ENCODE measurements at regions of chr9 and their contacts with region 1.

Region 1: GRCh38 chr9:78369639-78370219 is 72.8 kb downstream of the PSAT1 start:
- DNase-seq: peak; percentile 73
- ATAC-seq: peak; percentile 87
- H3K4me3 ChIP-seq: no peak overlapping the region
- H3K27ac ChIP-seq: no peak overlapping the region
- H3K4me1 ChIP-seq: no peaks in the 10 kb centered on the region; the same call in 1 of the 2 replicates
- H3K27me3 ChIP-seq: no peaks in the 10 kb centered on the region
- CTCF ChIP-seq: peak; percentile 87

Region 2: DNA sequence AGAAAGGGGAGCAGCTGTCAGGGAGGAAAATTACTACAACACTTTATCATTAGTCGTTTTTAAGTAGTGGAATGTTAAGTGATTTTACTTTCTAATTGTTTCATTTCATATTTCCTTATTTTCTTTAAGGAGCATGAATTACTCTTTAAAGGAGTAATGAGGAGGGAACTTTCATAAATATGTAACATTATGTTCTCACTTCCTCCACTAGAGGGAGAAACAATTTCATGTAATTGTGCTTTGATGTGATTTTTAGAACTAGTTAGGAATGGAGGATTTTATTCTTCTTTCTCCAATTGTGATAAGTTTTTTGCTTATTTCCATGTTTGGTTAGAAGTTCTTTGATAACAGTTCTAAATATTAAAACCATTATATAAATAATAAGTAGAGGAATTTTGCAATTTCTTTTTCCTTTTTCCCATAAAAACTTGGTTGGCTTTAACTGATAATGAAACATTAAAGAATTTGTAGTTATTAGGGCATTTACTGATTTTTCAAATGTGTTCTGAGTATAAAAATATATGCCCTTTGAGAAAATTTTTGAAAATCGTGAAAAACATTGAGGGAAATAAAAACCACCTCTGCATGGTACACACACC is 108.2 kb before region 1 on chr9:
- CTCF ChIA-PET with region 1: no interaction called
- POLR2A ChIA-PET with region 1: no interaction called
- intact Hi-C with region 1: loop called (anchors 1 kb)
- DNase-seq: peak; percentile 38
- ATAC-seq: 0 out of 2 replicates have a peak, but pooled peaks have one; percentile 27
- H3K4me3 ChIP-seq: no peak overlapping the region
- H3K27ac ChIP-seq: no peak overlapping the region
- H3K4me1 ChIP-seq: no peaks in the 10 kb centered on the region
- H3K27me3 ChIP-seq: no peaks in the 10 kb centered on the region
- CTCF ChIP-seq: peak; percentile 64

Measured in PC-3 (cell line).